ENCODE measurements at regions of chr17 and their contacts with region 1.

Region 1: GRCh38 chr17:35312790-35313711 is 60.4 kb downstream of the SLFN11 start:
- DNase-seq: peak; percentile 81
- H3K4me3 Mint-ChIP-seq: peak overlapping the region; percentile 82
- H3K27ac Mint-ChIP-seq: peak overlapping the region; percentile 83
- H3K4me1 Mint-ChIP-seq: peaks cover 30% of the 10 kb centered on the region
- H3K27me3 Mint-ChIP-seq: no peaks in the 10 kb centered on the region

Region 2: GRCh38 chr17:35227546-35227945 is 85.5 kb before region 1 on chr17:
- CTCF ChIA-PET with region 1: no interaction called
- POLR2A ChIA-PET with region 1: no interaction called
- intact Hi-C with region 1: no loop called
- DNase-seq: no peak
- H3K4me3 Mint-ChIP-seq: no peak overlapping the region
- H3K27ac Mint-ChIP-seq: no peak overlapping the region
- H3K4me1 Mint-ChIP-seq: peaks cover 23% of the 10 kb centered on the region
- H3K27me3 Mint-ChIP-seq: no peaks in the 10 kb centered on the region

Region 3: GRCh38 chr17:35341411-35341992 is 28.5 kb after region 1 on chr17:
- CTCF ChIA-PET with region 1: no interaction called
- POLR2A ChIA-PET with region 1: no interaction called
- intact Hi-C with region 1: loop called (anchors 1 kb)
- DNase-seq: peak; percentile 26
- H3K4me3 Mint-ChIP-seq: no peak overlapping the region
- H3K27ac Mint-ChIP-seq: peak overlapping the region; percentile 47
- H3K4me1 Mint-ChIP-seq: peaks cover 32% of the 10 kb centered on the region
- H3K27me3 Mint-ChIP-seq: no peaks in the 10 kb centered on the region

Region 4: DNA sequence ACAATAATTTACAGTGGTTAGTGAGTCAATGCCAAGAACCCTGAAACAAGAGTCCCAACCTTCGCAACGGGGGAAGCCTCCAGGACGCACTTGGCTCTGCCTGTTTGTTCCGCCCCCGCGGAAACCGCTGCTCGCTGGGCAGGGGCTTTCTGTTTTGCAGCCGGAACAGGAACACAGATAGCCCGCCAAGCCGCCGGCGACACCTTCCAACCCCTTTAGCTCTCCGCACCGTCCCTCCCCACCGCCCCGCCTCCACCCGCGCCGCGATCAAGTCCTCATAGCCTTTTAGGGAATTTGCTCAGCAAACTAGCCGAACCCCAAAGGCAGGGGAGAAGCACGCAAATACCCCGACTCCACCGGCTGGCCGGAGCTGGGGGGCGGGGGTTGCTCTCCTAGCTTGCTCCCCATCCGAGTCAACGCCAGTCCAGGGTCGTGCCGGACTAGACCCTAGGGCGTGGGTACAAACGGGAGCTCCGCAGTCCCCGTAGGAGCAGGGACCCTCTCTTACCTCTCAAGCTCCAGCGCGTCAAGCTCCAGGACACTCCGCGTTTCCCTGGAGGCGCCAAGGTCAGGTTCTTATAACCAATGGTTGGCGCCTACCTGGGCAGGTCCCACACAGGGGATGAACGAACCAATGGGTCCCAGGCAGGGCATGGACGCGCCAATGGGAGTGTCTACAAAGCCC is 135.3 kb after region 1 on chr17 and contains the start of gene SLFN13:
- CTCF ChIA-PET with region 1: interaction called, 14 read pairs
- POLR2A ChIA-PET with region 1: no interaction called
- intact Hi-C with region 1: no loop called
- DNase-seq: peak; percentile 97
- H3K4me3 Mint-ChIP-seq: peak within 1 kb of the TSS; percentile 57
- H3K27ac Mint-ChIP-seq: peak within 1 kb of the TSS; percentile 33
- H3K4me1 Mint-ChIP-seq: peaks cover 16% of the 10 kb centered on the region
- H3K27me3 Mint-ChIP-seq: no peaks in the 10 kb centered on the region
- total RNA-seq, gene SLFN13: 46.0 to 48.7 TPM

Region 5: GRCh38 chr17:35534576-35535093 is 221.6 kb after region 1 on chr17:
- CTCF ChIA-PET with region 1: interaction called, 177 read pairs
- POLR2A ChIA-PET with region 1: interaction called, 11 read pairs
- intact Hi-C with region 1: loop called (anchors 1 kb)
- DNase-seq: no peak
- H3K4me3 Mint-ChIP-seq: peak overlapping the region; percentile 75
- H3K27ac Mint-ChIP-seq: peak overlapping the region; percentile 97
- H3K4me1 Mint-ChIP-seq: peaks cover 48% of the 10 kb centered on the region
- H3K27me3 Mint-ChIP-seq: no peaks in the 10 kb centered on the region

Region 6: GRCh38 chr17:35747540-35748017 is 434.5 kb after region 1 on chr17:
- CTCF ChIA-PET with region 1: interaction called, 5 read pairs
- POLR2A ChIA-PET with region 1: no interaction called
- intact Hi-C with region 1: loop called (anchors 2 kb)
- DNase-seq: peak; percentile 86
- H3K4me3 Mint-ChIP-seq: no peak overlapping the region
- H3K27ac Mint-ChIP-seq: no peak overlapping the region
- H3K4me1 Mint-ChIP-seq: peaks cover 5% of the 10 kb centered on the region
- H3K27me3 Mint-ChIP-seq: peaks cover 38% of the 10 kb centered on the region